ENCODE measurements at regions of chr14 and their contacts with region 1.

Region 1: GRCh38 chr14:90301668-90302090 is 30.1 kb downstream of the NRDE2 start:
- DNase-seq: peak; percentile 26
- H3K4me3 ChIP-seq: no peak overlapping the region
- H3K27ac ChIP-seq: no peak overlapping the region
- H3K4me1 ChIP-seq: no peaks in the 10 kb centered on the region
- CTCF ChIP-seq: peak; percentile 73

Region 2: GRCh38 chr14:89767861-89768268 is 533.8 kb before region 1 on chr14:
- CTCF ChIA-PET with region 1: no interaction called
- POLR2A ChIA-PET with region 1: no interaction called
- intact Hi-C with region 1: no loop called
- DNase-seq: peak; percentile 81
- H3K4me3 ChIP-seq: no peak overlapping the region
- H3K27ac ChIP-seq: no peak overlapping the region
- H3K4me1 ChIP-seq: peaks cover 37% of the 10 kb centered on the region
- CTCF ChIP-seq: peak; percentile 94

Region 3: DNA sequence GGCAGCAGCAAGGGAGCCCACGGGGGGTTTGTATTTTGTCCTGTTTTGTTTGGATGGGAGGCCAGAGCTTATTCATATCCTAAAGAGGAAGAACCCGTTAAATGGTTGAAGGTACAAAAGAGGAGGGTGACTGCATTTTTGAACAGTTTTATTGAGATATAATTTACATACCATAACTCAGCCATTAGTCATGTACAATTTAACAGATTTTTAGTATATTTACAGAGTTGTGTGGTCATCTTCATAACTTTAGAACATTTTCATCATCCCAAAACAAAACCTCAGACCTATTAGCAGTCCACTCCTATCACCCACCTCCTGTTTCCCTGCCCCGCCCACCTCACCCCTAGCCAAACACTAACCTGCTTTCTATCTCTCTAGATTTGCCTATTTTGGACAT is 17.5 kb after region 1 on chr14:
- CTCF ChIA-PET with region 1: no interaction called
- POLR2A ChIA-PET with region 1: interaction called, 11 read pairs
- intact Hi-C with region 1: no loop called
- DNase-seq: no peak
- H3K4me3 ChIP-seq: no peak overlapping the region
- H3K27ac ChIP-seq: no peak overlapping the region
- H3K4me1 ChIP-seq: no peaks in the 10 kb centered on the region
- CTCF ChIP-seq: no peak

Region 4: DNA sequence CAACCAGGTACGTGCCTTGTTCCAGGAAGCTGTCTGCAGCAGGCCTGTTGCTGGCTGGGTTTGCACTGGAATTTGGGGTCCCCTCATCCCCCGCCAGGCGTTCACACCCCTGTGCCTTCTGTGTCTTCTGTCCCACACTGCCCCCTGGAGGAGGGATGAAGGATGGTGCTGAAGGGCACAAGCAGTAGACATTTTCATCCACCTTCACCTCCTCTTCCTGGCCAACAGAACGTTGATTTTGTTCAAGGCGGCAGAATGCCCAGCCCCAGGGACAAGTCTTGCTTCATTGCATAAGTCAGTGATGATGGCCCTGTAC is 217.2 kb after region 1 on chr14:
- CTCF ChIA-PET with region 1: no interaction called
- POLR2A ChIA-PET with region 1: no interaction called
- intact Hi-C with region 1: loop called (anchors 10 kb)
- DNase-seq: peak; percentile 49
- H3K4me3 ChIP-seq: no peak overlapping the region
- H3K27ac ChIP-seq: no peak overlapping the region
- H3K4me1 ChIP-seq: no peaks in the 10 kb centered on the region
- CTCF ChIP-seq: peak; percentile 83

Region 5: DNA sequence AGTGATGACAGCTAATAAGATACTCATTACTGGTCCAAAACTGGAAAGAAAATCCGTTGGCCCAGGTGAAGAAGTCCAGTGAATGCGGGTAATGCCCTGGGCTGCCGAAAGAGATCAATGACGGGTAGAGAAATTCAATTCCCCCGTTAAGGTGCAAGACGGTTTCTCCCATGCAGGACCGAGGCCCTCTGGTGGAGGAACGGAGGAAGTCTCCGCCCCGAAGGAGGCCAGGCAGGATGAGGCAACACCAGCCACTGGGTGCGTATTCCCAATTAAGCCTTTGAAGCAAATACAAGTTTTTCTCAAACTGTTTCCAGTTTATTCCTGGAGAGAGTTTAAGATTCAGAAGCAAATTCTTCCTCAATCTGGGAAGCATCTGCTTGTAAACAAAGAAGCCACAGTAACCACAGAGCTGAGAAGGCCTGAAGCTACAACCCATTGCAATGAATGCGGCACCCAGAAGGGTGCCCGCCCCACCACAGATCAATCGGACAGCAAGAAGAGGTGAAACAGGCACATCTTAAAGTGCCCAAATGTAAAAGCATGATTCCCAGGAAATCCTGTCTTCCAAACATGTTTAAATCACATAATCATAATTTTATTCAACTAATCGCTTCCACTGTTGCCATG is 396.0 kb after region 1 on chr14:
- CTCF ChIA-PET with region 1: interaction called, 3 read pairs
- POLR2A ChIA-PET with region 1: no interaction called
- intact Hi-C with region 1: loop called (anchors 2 kb)
- DNase-seq: peak; percentile 73
- H3K4me3 ChIP-seq: no peak overlapping the region
- H3K27ac ChIP-seq: no peak overlapping the region
- H3K4me1 ChIP-seq: peaks cover 3% of the 10 kb centered on the region
- CTCF ChIP-seq: peak; percentile 95

Measured in OCI-LY7 (cell line).